OCI-LY7 (cell line): ENCODE measurements at regions of chr7 and their contacts with region 1.

Region 1: GRCh38 chr7:17940302-17940883 is at the start of gene SNX13:
- DNase-seq: peak; percentile 94
- H3K4me3 ChIP-seq: peak within 1 kb of the TSS; percentile 96
- H3K27ac ChIP-seq: peak within 1 kb of the TSS; percentile 71
- H3K4me1 ChIP-seq: peaks cover 24% of the 10 kb centered on the region
- CTCF ChIP-seq: peak; percentile 48
- total RNA-seq, gene SNX13: 20.0 and 25.1 TPM in 2 replicates

Region 2: GRCh38 chr7:17928055-17928454 is 12.3 kb before region 1 on chr7:
- CTCF ChIA-PET with region 1: no interaction called
- POLR2A ChIA-PET with region 1: interaction called, 13 read pairs
- intact Hi-C with region 1: no loop called
- DNase-seq: no peak
- H3K4me3 ChIP-seq: no peak overlapping the region
- H3K27ac ChIP-seq: no peak overlapping the region
- H3K4me1 ChIP-seq: no peaks in the 10 kb centered on the region
- CTCF ChIP-seq: no peak

Region 3: DNA sequence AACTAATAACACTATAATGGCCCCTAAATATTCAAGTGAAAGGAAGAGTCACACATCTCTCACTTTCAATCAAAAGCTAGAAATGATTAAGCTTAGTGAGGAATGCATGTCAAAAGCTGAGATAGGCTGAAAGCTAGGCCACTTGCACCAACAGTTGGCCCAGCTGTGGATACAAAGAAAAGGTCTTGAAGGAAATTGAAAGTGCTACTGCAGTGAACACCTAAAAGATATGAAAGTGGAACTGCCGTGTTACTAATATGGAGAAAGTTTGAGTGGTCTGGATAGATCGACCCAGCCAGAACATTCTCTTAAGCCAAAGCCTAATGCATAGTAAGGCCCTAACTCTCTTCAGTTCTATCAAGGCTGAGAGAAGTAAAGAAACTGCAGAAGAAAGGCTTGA is 12.0 kb after region 1 on chr7:
- CTCF ChIA-PET with region 1: no interaction called
- POLR2A ChIA-PET with region 1: interaction called, 21 read pairs
- intact Hi-C with region 1: no loop called
- DNase-seq: peak; percentile 45
- H3K4me3 ChIP-seq: no peak overlapping the region
- H3K27ac ChIP-seq: no peak overlapping the region
- H3K4me1 ChIP-seq: peaks cover 10% of the 10 kb centered on the region
- CTCF ChIP-seq: no peak

Region 4: DNA sequence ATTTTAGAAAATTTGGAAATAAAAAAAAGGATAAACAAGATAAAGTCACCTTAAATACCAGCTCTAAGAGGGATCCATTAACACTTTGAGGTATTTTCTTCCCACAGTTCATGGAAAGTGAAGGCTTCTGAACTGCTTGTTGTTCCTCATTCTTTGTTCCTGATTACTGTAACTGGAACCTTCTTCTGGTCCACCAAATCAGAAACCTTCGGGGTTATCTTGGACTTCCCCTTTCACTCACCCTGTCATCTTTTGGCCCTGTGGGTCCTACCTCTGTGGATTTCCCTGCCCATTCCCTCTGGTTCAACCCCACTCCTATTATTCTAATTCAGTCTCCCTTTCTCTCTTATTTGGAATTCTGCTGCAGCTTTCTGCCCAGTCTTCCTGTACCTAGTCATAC is 203.8 kb after region 1 on chr7:
- CTCF ChIA-PET with region 1: no interaction called
- POLR2A ChIA-PET with region 1: no interaction called
- intact Hi-C with region 1: no loop called
- DNase-seq: no peak
- H3K4me3 ChIP-seq: no peak overlapping the region
- H3K27ac ChIP-seq: no peak overlapping the region
- H3K4me1 ChIP-seq: no peaks in the 10 kb centered on the region
- CTCF ChIP-seq: no peak